Aorta (tissue), 5 donors: ENCODE measurements at regions of chr5 and their contacts with region 1.

Region 1: GRCh38 chr5:82549263-82549662 is 271.1 kb upstream of the RPS23 start:
- DNase-seq: no peak
- ATAC-seq: no peak
- H3K4me3 ChIP-seq: no peak overlapping the region
- H3K27ac ChIP-seq: no peak overlapping the region
- H3K4me1 ChIP-seq: peaks cover 2 to 3% of the 10 kb centered on the region in 2 donors
- H3K27me3 ChIP-seq: no peaks in the 10 kb centered on the region

Region 2: GRCh38 chr5:82351754-82352145 is 197.5 kb before region 1 on chr5:
- intact Hi-C with region 1: loop called (anchors 10 kb)
- DNase-seq: no peak
- ATAC-seq: peak; percentile 83
- H3K4me3 ChIP-seq: no peak overlapping the region
- H3K27ac ChIP-seq: peak overlapping the region in 1 of 2 donors; percentile 64
- H3K4me1 ChIP-seq: peaks cover 2 to 6% of the 10 kb centered on the region in 2 donors
- H3K27me3 ChIP-seq: no peaks in the 10 kb centered on the region

Region 3: GRCh38 chr5:82406205-82406773 is 143.0 kb before region 1 on chr5:
- intact Hi-C with region 1: loop called in 1 of 2 experiments (anchors 10 kb)
- DNase-seq: no peak
- ATAC-seq: peak; percentile 71
- H3K4me3 ChIP-seq: no peak overlapping the region
- H3K27ac ChIP-seq: peak overlapping the region; percentile 76 to 94
- H3K4me1 ChIP-seq: peaks cover 4 to 14% of the 10 kb centered on the region in 2 donors
- H3K27me3 ChIP-seq: no peaks in the 10 kb centered on the region

Region 4: DNA sequence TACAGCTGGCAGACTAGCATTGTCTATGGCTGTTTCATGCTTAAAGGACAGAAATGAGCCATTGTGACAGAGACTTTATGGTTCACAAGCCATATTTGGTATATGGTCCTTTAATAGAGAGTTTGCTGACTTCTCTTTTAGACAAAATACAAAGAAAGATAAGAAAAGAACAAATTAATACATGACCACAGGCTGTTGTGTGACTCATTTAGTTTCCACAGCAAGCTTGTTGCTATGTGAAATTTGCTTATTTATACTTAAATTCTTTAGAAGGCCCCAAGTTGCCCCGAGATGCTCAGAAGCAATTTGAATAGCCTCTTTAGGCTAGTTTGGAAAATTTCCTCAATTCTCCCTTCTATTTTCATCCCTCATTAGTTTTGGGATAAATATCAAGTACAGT is 44.2 kb after region 1 on chr5:
- intact Hi-C with region 1: loop called in 1 of 2 experiments (anchors 5 kb)
- DNase-seq: no peak
- ATAC-seq: peak; percentile 31
- H3K4me3 ChIP-seq: no peak overlapping the region
- H3K27ac ChIP-seq: no peak overlapping the region
- H3K4me1 ChIP-seq: peaks cover 4 to 6% of the 10 kb centered on the region in 2 donors
- H3K27me3 ChIP-seq: no peaks in the 10 kb centered on the region

Region 5: GRCh38 chr5:82635561-82636288 is 86.5 kb after region 1 on chr5:
- intact Hi-C with region 1: loop called in 1 of 2 experiments (anchors 5 kb)
- DNase-seq: no peak
- ATAC-seq: no peak
- H3K4me3 ChIP-seq: no peak overlapping the region
- H3K27ac ChIP-seq: no peak overlapping the region
- H3K4me1 ChIP-seq: peaks cover 0 to 10% of the 10 kb centered on the region in 2 donors
- H3K27me3 ChIP-seq: no peaks in the 10 kb centered on the region

Region 6: GRCh38 chr5:82649943-82650342 is 100.7 kb after region 1 on chr5:
- intact Hi-C with region 1: no loop called
- DNase-seq: no peak
- ATAC-seq: no peak
- H3K4me3 ChIP-seq: no peak overlapping the region
- H3K27ac ChIP-seq: no peak overlapping the region
- H3K4me1 ChIP-seq: no peaks in the 10 kb centered on the region
- H3K27me3 ChIP-seq: no peaks in the 10 kb centered on the region

Region 7: GRCh38 chr5:82905986-82906385 is 356.7 kb after region 1 on chr5:
- intact Hi-C with region 1: no loop called
- DNase-seq: no peak
- ATAC-seq: no peak
- H3K4me3 ChIP-seq: no peak overlapping the region
- H3K27ac ChIP-seq: no peak overlapping the region
- H3K4me1 ChIP-seq: no peaks in the 10 kb centered on the region
- H3K27me3 ChIP-seq: no peaks in the 10 kb centered on the region